ENCODE measurements at regions of chrX and their contacts with region 1.

Region 1: GRCh38 chrX:110992611-110993010 is 103.4 kb upstream of the PAK3 start:
- DNase-seq: peak; percentile 52 to 63
- H3K4me3 ChIP-seq: no peak overlapping the region
- H3K4me1 ChIP-seq: no peaks in the 10 kb centered on the region
- H3K27me3 ChIP-seq: no peaks in the 10 kb centered on the region

Region 2: GRCh38 chrX:110541266-110541665 is 451.3 kb before region 1 on chrX:
- in situ Hi-C with region 1: no loop called
- DNase-seq: no peak
- H3K4me3 ChIP-seq: no peak overlapping the region
- H3K4me1 ChIP-seq: no peaks in the 10 kb centered on the region
- H3K27me3 ChIP-seq: no peaks in the 10 kb centered on the region

Region 3: GRCh38 chrX:110924871-110925270 is 67.7 kb before region 1 on chrX:
- in situ Hi-C with region 1: no loop called
- DNase-seq: no peak
- H3K4me3 ChIP-seq: no peak overlapping the region
- H3K4me1 ChIP-seq: no peaks in the 10 kb centered on the region
- H3K27me3 ChIP-seq: no peaks in the 10 kb centered on the region

Region 4: GRCh38 chrX:111098874-111099273 is 106.3 kb after region 1 on chrX:
- in situ Hi-C with region 1: loop called (anchors 10 kb)
- DNase-seq: peak; percentile 60 to 90
- H3K4me3 ChIP-seq: no peak overlapping the region
- H3K4me1 ChIP-seq: peaks cover 14% of the 10 kb centered on the region
- H3K27me3 ChIP-seq: no peaks in the 10 kb centered on the region

Measured in HAP-1 (cell line).